AG04449 (cell line): ENCODE measurements at regions of chr19 and their contacts with region 1.

Region 1: GRCh38 chr19:1249298-1249989 is 1.1 kb downstream of the MIDN start:
- DNase-seq: no peak
- H3K4me3 ChIP-seq: peak overlapping the region; percentile 82
- CTCF ChIP-seq: no peak

Region 2: DNA sequence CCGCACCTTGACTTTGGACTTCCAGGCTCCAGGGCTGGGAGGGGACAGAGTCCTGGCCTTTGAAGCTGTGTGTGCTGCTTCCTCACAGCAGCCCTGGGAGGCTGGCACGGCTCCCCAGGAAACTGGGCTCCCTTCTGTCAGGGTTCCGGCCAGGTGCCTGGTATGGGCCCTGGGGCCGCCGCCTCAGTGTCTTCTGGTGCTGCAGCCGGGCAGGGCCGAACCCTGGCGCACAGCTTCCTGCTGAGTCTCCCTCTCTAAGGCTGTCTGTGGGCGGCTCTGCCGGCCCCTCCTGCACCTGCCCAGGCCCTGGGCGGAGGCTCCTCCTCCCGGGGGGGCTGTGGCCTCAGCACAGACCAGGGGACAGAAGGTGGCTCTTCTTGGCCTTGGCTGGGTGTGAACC is 113.2 kb before region 1 on chr19:
- CTCF ChIA-PET with region 1: no interaction called
- POLR2A ChIA-PET with region 1: no interaction called
- DNase-seq: no peak
- H3K4me3 ChIP-seq: no peak overlapping the region
- CTCF ChIP-seq: no peak

Region 3: GRCh38 chr19:1260636-1261537 is 11.4 kb after region 1 on chr19:
- CTCF ChIA-PET with region 1: interaction called, 626 read pairs
- POLR2A ChIA-PET with region 1: interaction called, 188 read pairs
- DNase-seq: no peak
- H3K4me3 ChIP-seq: peak overlapping the region; percentile 69
- CTCF ChIP-seq: no peak

Region 4: DNA sequence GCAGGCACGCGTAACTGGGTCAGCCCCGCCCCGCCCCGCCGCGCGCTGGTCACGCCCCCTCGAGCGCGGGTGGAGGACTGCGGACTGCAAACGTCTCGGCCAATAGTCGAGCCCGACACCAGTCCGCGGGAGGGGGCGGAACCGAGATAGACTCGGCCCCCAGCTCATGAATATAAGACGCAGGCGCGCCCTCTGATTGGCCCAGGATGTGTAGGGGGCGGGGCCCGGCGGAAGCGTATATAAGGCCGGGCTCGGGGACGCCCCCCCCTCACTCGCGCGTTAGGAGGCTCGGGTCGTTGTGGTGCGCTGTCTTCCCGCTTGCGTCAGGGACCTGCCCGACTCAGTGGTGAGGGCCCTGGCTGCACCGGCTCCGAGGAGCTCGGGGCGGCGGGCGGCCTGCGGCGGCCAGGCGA is 19.6 kb after region 1 on chr19 and contains the start of gene CIRBP:
- CTCF ChIA-PET with region 1: interaction called, 626 read pairs
- POLR2A ChIA-PET with region 1: interaction called, 188 read pairs
- DNase-seq: peak; percentile 93
- H3K4me3 ChIP-seq: peak within 1 kb of the TSS; percentile 82
- CTCF ChIP-seq: no peak

Region 5: GRCh38 chr19:1632462-1633268 is 383.2 kb after region 1 on chr19:
- CTCF ChIA-PET with region 1: no interaction called
- POLR2A ChIA-PET with region 1: no interaction called
- DNase-seq: no peak
- H3K4me3 ChIP-seq: no peak overlapping the region
- CTCF ChIP-seq: no peak